Activated CD8-positive, alpha-beta T cell treated with anti-CD3 and anti-CD28 coated beads for 36 hours (primary cell): ENCODE measurements at regions of chr14 and their contacts with region 1.

Region 1: GRCh38 chr14:100192672-100193416 is 33.4 kb upstream of the DEGS2 start:
- DNase-seq: peak; percentile 100
- ATAC-seq: peak; percentile 99
- H3K4me3 Mint-ChIP-seq: peak overlapping the region; percentile 69
- H3K27ac Mint-ChIP-seq: peak overlapping the region; percentile 94
- H3K4me1 Mint-ChIP-seq: peaks cover 11% of the 10 kb centered on the region
- H3K27me3 Mint-ChIP-seq: no peaks in the 10 kb centered on the region
- CTCF ChIP-seq: peak; percentile 84

Region 2: GRCh38 chr14:99976666-99977065 is 216.2 kb before region 1 on chr14:
- CTCF ChIA-PET with region 1: interaction called, 36 read pairs
- POLR2A ChIA-PET with region 1: no interaction called
- intact Hi-C with region 1: loop called (anchors 5 kb)
- DNase-seq: no peak
- ATAC-seq: no peak
- H3K4me3 Mint-ChIP-seq: no peak overlapping the region
- H3K27ac Mint-ChIP-seq: no peak overlapping the region
- H3K4me1 Mint-ChIP-seq: peaks cover 10% of the 10 kb centered on the region
- H3K27me3 Mint-ChIP-seq: no peaks in the 10 kb centered on the region
- CTCF ChIP-seq: no peak

Region 3: DNA sequence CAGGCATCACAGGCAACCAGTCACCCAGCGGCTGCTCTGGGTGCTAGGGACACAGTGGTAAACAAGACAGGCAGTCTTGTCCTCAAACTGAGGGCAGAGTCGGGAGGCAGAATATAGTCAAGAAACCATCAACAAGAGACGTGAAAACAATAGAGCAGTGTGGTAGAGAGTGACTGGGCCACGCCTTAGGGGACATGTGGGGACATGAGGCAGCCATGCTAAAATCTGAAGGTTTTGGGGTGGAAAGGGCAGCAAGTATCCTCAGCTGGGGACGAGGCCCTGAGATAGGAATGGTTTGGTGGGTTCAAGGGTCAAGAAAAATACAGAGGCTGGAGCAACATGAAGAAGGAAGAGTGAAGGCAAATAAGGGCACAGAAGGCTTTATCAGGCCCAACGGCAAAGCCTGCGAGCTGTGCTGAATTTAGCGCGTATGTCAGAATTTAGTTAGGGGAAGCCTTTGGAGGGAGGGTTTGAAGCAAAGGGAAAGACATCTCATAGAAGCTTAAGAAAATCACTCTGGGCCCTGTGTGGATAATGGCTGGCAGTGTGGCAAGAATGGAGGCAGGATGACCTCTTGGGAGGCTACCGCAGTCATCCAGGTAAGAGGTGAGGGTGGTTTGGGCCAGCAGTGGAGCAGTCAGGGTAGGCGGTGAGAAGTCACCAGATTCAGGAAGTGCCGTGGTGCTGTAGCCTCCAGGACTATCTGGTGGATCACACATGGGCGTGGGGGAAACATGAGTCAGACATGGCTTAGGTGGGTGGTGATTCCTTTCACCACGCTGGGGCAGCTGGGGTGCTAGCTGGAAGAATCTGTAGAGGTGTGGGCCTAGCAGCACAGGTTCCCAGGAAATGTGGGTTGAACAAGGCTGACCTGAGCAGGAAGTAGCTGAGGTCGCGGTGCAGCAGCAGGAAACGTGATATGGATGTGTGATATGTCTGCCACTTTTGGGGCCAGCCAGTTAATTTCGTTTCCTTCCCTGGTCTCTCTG is 124.6 kb before region 1 on chr14:
- CTCF ChIA-PET with region 1: interaction called, 10 read pairs
- POLR2A ChIA-PET with region 1: interaction called, 4 read pairs
- intact Hi-C with region 1: loop called (anchors 5 kb)
- DNase-seq: peak; percentile 95
- ATAC-seq: peak; percentile 41
- H3K4me3 Mint-ChIP-seq: peak overlapping the region; percentile 89
- H3K27ac Mint-ChIP-seq: peak overlapping the region; percentile 99
- H3K4me1 Mint-ChIP-seq: peaks cover 47% of the 10 kb centered on the region
- H3K27me3 Mint-ChIP-seq: no peaks in the 10 kb centered on the region
- CTCF ChIP-seq: no peak

Region 4: DNA sequence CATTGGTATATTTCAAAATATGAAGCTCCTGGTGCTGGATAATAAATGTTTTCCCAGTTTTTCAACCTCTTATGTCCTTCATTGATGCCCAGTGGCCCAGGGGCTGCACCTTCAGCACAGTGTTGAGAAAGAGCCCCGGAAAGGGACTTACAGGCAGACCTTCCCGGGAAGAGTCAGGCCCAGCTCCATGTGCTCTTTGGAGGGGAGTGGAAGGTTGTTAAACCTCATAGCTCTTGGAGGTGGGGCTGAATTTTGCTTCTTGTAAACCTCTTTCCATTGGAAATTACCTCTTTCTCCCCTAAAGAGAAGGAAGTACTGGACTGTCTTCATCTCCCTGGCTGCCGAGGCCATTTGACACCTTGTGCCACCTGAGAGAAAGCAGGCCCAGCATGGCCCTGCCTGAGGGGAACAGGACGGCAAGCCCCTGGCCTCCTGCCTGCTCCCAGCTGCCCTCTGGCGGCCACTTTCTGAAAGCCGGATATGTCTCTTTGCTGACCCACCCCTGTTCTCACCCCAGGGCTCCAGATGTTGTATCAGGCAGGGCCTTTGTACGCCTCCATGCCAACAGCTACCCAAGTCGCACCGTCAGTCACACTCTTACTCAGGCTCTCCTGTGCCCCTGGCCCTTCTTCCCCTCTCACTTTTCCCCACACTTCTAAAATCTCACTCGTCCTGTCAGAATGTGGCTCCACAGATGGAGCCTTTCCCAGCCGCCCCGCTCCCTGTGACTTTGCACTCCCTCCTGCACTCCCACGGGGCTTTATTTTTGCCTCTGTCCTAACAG is 84.6 kb before region 1 on chr14:
- CTCF ChIA-PET with region 1: interaction called, 14 read pairs
- POLR2A ChIA-PET with region 1: no interaction called
- intact Hi-C with region 1: no loop called
- DNase-seq: peak; percentile 95
- ATAC-seq: peak; percentile 58
- H3K4me3 Mint-ChIP-seq: peak overlapping the region; percentile 16
- H3K27ac Mint-ChIP-seq: peak overlapping the region; percentile 96
- H3K4me1 Mint-ChIP-seq: peaks cover 82% of the 10 kb centered on the region
- H3K27me3 Mint-ChIP-seq: no peaks in the 10 kb centered on the region
- CTCF ChIP-seq: peak; percentile 87

Region 5: DNA sequence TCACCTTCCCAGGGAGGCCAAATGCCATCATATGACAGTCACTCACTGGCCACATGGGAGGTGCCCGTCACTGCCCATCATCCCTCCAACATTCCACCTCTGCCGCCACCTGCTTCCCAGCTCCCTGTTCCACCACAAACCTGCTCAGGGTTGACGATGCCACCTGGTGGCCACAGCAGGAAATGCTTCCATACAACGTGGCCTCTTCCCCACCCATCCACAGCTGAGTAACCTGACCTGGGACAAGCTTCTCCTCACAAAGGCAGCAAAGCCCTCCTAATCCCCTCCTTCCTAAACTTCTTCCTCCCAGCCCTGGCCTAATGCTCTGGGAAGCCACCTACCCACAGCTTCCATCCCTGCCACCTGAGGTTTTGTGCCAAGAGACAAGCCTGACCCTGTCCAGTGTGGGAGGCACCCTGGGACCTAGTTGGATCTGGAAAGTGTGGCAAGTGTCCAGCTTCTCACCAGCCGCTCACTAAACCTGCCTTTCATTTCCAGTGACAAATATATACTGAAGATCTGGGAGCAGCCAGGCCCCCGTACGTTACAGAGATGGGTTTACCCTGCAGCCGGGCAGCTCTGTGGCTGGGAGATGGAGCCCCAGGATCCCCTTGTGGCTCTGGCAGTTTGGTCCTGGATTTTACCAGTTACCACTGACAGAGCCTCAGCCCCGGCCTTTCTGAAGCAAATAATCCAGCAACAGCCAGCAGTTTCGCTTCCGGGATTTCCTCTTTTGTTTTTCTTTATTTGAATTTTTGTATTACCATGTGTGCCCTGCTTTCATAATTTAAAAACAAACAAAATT is 37.6 kb before region 1 on chr14:
- CTCF ChIA-PET with region 1: interaction called, 25 read pairs
- POLR2A ChIA-PET with region 1: no interaction called
- intact Hi-C with region 1: no loop called
- DNase-seq: peak; percentile 62
- ATAC-seq: peak; percentile 26
- H3K4me3 Mint-ChIP-seq: no peak overlapping the region
- H3K27ac Mint-ChIP-seq: no peak overlapping the region
- H3K4me1 Mint-ChIP-seq: peaks cover 3% of the 10 kb centered on the region
- H3K27me3 Mint-ChIP-seq: peaks cover 16% of the 10 kb centered on the region
- CTCF ChIP-seq: peak; percentile 93

Region 6: DNA sequence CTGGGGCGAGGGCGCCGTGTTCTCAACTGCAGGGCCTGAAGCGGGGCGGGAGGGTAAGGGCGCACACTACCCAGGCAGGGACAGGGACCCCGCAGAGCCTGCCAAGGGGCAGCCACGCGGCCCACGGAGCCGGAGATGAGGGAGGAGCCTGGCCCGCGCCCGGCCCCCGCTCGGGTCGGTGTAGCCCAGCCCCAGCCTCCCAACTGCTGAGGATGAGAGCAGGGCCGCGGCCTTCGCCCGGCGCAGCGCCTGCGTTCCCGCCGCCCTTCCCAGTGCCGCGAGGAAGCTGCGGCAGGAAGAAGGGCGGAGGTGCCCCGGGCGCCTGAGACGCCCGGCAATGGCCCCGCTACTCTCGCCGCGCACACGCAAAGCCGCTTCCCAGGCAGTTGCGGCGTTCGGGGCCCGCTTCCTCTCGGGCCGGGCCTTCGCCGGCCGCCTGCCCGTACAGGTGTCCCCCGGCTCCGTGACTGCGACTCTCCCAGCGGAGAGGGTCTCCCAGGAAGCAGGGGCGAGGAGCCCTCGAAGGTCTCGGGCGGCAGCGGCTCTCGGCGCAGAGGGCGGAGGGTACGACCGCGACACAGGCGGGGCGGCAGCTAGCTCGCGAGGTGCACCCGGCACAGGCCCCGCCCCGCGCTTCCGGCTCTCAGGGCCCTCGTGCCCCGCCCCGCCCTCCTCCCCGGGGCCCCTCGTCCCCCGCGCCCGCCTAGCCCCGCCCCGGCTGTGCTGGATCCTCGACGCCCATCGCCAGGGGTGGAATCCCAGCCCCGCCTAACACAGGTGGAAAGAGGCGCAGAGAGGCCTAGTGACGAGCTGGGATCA is 21.3 kb after region 1 on chr14:
- CTCF ChIA-PET with region 1: interaction called, 37 read pairs
- POLR2A ChIA-PET with region 1: interaction called, 6 read pairs
- intact Hi-C with region 1: no loop called
- DNase-seq: peak; percentile 95
- ATAC-seq: peak; percentile 95
- H3K4me3 Mint-ChIP-seq: peak overlapping the region; percentile 83
- H3K27ac Mint-ChIP-seq: peak overlapping the region; percentile 91
- H3K4me1 Mint-ChIP-seq: peaks cover 23% of the 10 kb centered on the region
- H3K27me3 Mint-ChIP-seq: no peaks in the 10 kb centered on the region
- CTCF ChIP-seq: no peak

Region 7: DNA sequence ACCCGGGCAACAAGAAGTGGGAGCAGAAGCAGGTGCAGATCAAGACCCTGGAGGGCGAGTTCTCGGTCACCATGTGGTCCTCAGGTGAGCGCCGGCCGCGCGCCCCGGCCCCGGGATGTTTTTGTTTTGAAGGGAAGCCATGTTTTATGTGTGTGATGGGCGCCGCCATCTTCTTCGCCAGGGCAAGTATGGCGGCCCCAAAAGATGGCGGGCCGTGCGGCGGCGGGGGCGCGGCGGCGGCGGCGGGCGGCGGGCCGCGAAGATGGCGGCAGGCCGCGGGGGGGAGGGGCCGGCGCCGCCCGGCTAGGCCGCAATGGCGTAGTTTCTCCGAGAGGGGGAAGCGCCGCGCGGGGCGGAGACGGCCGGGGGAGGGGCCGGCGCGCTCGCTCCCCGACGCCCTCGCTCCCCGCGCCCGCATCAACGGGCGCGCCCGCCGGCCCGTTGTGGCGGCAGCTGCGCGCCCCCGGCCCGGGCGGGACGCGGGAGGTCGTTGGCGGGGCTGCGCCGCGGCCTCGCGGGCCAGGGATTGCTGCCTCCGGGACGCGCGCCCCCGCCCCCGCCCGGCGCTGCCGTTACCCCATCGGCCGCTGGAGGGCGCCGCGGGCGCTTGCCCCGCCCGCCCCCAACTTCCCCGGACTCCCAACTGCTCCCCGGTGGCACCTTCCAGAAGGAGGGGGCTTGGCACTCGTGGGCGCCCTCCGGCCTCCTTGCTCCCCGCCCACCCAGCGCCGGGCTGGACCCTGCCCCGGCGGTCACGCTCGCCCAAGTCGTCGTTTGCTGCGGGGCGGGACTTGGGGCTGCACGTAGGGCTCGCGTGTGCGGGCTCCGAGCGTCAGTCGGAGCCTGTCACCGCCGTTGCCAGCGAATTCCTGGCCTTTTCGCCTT is 47.2 kb after region 1 on chr14:
- CTCF ChIA-PET with region 1: interaction called, 21 read pairs
- POLR2A ChIA-PET with region 1: interaction called, 3 read pairs
- intact Hi-C with region 1: no loop called
- DNase-seq: peak; percentile 88
- ATAC-seq: peak; percentile 52
- H3K4me3 Mint-ChIP-seq: peak overlapping the region; percentile 97
- H3K27ac Mint-ChIP-seq: peak overlapping the region; percentile 93
- H3K4me1 Mint-ChIP-seq: peaks cover 45% of the 10 kb centered on the region
- H3K27me3 Mint-ChIP-seq: no peaks in the 10 kb centered on the region
- CTCF ChIP-seq: peak; percentile 77